ENCODE measurements at regions of chr13 and their contacts with region 1.

Region 1: GRCh38 chr13:31431722-31432137 is 232.0 kb downstream of the B3GLCT start:
- DNase-seq: peak in 1 of 2 donors; percentile 62
- H3K4me3 ChIP-seq: no peak overlapping the region
- H3K27ac ChIP-seq: no peak overlapping the region
- H3K4me1 ChIP-seq: no peaks in the 10 kb centered on the region
- H3K27me3 ChIP-seq: no peaks in the 10 kb centered on the region
- CTCF ChIP-seq: peak; percentile 55 to 84

Region 2: GRCh38 chr13:31742097-31742734 is 310.5 kb after region 1 on chr13:
- intact Hi-C with region 1: loop called (anchors 5 kb)
- DNase-seq: peak; percentile 66 to 75
- H3K4me3 ChIP-seq: no peak overlapping the region
- H3K27ac ChIP-seq: no peak overlapping the region
- H3K4me1 ChIP-seq: peaks cover 0 to 12% (median 0%) of the 10 kb centered on the region in 4 donors
- H3K27me3 ChIP-seq: no peaks in the 10 kb centered on the region
- CTCF ChIP-seq: peak; percentile 91 to 99

Region 3: GRCh38 chr13:31797154-31797775 is 365.5 kb after region 1 on chr13:
- intact Hi-C with region 1: loop called (anchors 5 kb)
- DNase-seq: no peak
- H3K4me3 ChIP-seq: no peak overlapping the region
- H3K27ac ChIP-seq: no peak overlapping the region
- H3K4me1 ChIP-seq: peaks cover 0 to 5% (median 2%) of the 10 kb centered on the region in 4 donors
- H3K27me3 ChIP-seq: no peaks in the 10 kb centered on the region
- CTCF ChIP-seq: peak; percentile 50 to 72

Region 4: DNA sequence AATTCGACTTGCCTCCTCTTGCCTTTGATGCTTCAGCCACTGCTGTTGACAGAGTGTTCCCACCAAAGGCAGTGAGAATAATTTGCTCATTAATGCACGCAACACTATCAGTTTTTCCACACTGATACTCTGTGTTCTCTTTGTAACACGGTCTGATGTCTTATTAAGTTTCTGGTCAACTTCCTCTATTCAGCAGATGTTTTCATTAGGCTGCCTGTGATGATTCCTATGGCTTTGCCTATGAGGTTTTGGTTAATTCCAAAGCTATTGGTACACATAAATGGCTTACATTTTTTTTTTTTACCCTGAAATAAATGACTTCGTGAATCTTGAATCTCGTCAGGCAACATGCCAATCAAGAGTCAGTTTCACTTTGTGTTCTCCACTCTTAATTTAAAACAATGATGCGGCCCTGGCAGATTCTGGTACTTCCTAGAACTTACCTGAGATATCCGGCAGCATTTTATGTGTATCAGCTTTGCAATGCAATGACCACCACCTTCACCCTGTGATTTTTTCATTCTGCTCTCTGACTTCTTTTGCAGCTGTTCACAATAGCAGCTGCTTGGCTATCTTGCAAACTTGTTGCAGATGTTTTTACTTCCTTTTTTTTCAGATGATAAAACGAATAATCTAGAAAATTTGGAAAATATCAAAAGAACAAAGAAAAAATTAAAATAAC is 1557.0 kb after region 1 on chr13:
- intact Hi-C with region 1: no loop called
- DNase-seq: no peak
- H3K4me3 ChIP-seq: no peak overlapping the region
- H3K27ac ChIP-seq: no peak overlapping the region
- H3K4me1 ChIP-seq: no peaks in the 10 kb centered on the region
- H3K27me3 ChIP-seq: peaks cover 0 to 3% of the 10 kb centered on the region in 2 donors
- CTCF ChIP-seq: no peak

Measured in tibial artery (tissue), 4 donors.